GM10248 (cell line): ENCODE measurements at regions of chr1 and their contacts with region 1.

Region 1: GRCh38 chr1:116504308-116505156 is 66.3 kb downstream of the CD58 start:
- DNase-seq: peak; percentile 86
- CTCF ChIP-seq: no peak

Region 2: GRCh38 chr1:116492358-116492811 is 12.1 kb before region 1 on chr1:
- CTCF ChIA-PET with region 1: interaction called, 260 read pairs
- POLR2A ChIA-PET with region 1: no interaction called
- DNase-seq: no peak
- CTCF ChIP-seq: no peak